ENCODE measurements at regions of chr20 and their contacts with region 1.

Region 1: DNA sequence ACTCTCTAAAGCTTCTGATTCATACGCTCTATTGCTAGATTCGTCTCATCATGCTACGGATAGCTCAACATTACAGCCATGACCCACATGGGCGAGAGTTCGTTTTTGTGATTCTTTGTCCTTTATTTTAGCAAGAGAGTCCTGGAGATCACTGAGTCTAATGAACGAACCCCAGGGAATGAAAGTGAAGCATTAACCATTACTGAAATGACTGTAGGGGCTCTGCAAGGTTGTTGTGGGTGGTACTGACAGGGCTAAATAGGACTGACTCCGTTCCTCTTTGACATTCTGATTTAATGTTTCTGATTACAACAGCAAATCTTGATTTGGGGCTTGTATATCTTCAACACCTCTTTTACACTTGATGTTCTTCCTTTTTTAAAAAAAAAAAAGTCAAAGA is 13.7 kb upstream of the RTF2 start:
- DNase-seq: peak; percentile 26
- H3K4me3 Mint-ChIP-seq: no peak overlapping the region
- H3K27ac Mint-ChIP-seq: peak overlapping the region; percentile 68
- H3K4me1 Mint-ChIP-seq: peaks cover 21% of the 10 kb centered on the region
- H3K27me3 Mint-ChIP-seq: no peaks in the 10 kb centered on the region

Region 2: GRCh38 chr20:56468316-56469082 is 13.7 kb after region 1 on chr20 and contains the start of gene RTF2:
- CTCF ChIA-PET with region 1: no interaction called
- intact Hi-C with region 1: loop called (anchors 1 kb)
- DNase-seq: peak; percentile 95
- H3K4me3 Mint-ChIP-seq: peak within 1 kb of the TSS; percentile 100
- H3K27ac Mint-ChIP-seq: peak within 1 kb of the TSS; percentile 98
- H3K4me1 Mint-ChIP-seq: peaks cover 29% of the 10 kb centered on the region
- H3K27me3 Mint-ChIP-seq: no peaks in the 10 kb centered on the region
- total RNA-seq, gene RTF2: 76.8 to 82.9 TPM

Measured in activated naive CD4-positive, alpha-beta T cell treated with anti-CD3 and anti-CD28 coated beads for 36 hours (primary cell).